PC-3 (cell line): ENCODE measurements at regions of chr12 and their contacts with region 1.

Region 1: DNA sequence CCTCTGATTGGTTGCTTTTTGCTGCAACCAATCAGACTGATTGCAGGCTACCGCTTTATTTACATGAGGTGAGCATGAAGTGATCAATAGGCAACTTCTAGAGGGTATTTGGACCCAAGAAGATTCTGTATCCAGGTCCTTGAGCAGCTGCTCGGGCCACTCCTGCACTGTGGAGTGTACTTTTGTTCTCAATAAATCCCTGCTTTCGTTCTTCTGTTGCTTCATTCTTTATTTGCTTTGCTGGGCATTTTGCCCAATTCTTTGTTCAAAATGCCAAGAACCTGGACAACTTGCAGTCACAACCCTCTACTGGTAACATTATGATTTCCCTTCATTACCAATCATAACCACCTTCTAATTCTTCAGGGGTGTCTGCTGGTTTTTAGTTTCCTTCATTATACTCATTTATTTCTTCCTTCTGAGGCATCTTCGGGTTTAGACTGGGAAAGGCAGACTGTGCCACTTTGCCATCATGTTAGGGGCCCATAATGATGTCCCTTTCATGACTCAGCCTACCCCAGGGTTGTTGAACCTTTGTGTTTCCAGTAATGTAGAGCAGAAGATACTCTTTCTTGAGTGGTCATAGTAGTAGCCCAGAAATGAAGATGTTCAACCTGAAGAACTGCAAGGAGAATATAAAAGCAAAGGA is 43.4 kb upstream of the LIMA1 start:
- DNase-seq: peak; percentile 88
- ATAC-seq: peak; percentile 76
- H3K4me3 ChIP-seq: peak overlapping the region; percentile 48
- H3K27ac ChIP-seq: peak overlapping the region; percentile 65
- H3K4me1 ChIP-seq: peaks cover 29% of the 10 kb centered on the region
- H3K27me3 ChIP-seq: no peaks in the 10 kb centered on the region
- CTCF ChIP-seq: no peak; the same call in 1 of the 2 replicates

Region 2: DNA sequence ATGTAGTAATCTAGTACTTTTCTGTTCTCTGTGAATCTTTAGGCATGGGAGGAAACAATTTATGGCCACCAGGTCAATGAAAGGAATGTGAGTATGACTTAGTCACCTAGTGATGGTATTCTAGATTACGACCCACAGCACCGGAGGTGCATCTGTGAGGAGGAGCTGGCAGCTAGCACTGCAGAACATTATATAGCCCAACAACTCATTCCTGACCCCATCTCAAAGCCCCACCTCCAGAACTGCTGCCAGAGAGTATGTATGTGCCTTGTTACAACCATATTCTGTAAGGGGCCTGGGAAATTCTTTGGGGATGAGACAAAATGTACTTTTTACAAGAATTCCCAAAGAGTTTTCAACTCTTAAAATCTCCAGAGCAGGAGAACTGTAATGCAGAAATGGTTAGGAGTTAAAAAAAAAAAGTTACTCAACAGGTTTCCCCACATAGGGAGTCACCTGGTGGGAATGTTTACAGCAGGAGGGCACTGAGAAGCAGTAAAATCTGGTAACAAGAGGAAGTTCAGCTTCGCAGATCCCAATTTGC is 124.7 kb before region 1 on chr12:
- CTCF ChIA-PET with region 1: no interaction called
- POLR2A ChIA-PET with region 1: no interaction called
- intact Hi-C with region 1: loop called (anchors 5 kb)
- DNase-seq: peak; percentile 97
- ATAC-seq: peak; percentile 92
- H3K4me3 ChIP-seq: peak overlapping the region; percentile 61; the same call in 1 of the 2 replicates
- H3K27ac ChIP-seq: peak overlapping the region; percentile 99
- H3K4me1 ChIP-seq: peaks cover 51% of the 10 kb centered on the region
- H3K27me3 ChIP-seq: no peaks in the 10 kb centered on the region
- CTCF ChIP-seq: no peak

Region 3: DNA sequence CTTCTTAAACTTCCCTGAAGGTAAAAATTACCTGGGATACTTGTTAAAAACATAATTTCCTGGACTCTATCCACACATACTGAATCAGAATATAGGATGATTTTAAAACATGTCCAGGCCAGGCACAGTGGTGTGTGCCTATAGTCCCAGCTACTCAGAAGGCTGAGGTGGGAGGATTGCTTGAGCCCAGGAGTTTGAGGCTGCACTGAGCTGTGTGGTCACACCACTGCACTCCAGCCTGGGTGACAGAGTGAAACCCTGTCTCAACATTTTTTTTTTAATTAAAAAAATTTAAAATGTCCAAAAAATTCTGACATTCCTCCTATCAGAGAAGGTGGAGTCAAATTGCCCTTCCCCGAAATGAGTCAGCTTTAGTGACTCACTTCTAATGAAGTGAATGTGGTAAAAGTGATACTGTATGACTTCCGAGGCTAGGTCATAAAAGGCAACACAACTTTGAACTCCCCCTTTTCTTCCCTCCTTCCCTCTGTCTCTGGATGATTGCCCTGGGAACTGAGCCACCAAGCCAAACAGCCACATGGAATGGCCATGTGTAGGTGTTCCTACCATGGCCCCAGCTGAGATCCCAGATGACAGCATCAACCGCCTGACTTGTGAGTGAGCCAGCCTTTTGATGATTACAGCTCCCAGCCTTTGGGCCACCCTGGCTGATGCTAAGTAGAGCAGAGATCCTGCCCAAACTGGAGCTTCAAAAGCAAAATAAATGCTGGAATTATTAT is 79.7 kb before region 1 on chr12:
- CTCF ChIA-PET with region 1: no interaction called
- POLR2A ChIA-PET with region 1: no interaction called
- intact Hi-C with region 1: no loop called
- DNase-seq: peak; percentile 99
- ATAC-seq: peak; percentile 84
- H3K4me3 ChIP-seq: no peak overlapping the region
- H3K27ac ChIP-seq: peak overlapping the region; percentile 96
- H3K4me1 ChIP-seq: peaks cover 69% of the 10 kb centered on the region
- H3K27me3 ChIP-seq: no peaks in the 10 kb centered on the region
- CTCF ChIP-seq: no peak

Region 4: DNA sequence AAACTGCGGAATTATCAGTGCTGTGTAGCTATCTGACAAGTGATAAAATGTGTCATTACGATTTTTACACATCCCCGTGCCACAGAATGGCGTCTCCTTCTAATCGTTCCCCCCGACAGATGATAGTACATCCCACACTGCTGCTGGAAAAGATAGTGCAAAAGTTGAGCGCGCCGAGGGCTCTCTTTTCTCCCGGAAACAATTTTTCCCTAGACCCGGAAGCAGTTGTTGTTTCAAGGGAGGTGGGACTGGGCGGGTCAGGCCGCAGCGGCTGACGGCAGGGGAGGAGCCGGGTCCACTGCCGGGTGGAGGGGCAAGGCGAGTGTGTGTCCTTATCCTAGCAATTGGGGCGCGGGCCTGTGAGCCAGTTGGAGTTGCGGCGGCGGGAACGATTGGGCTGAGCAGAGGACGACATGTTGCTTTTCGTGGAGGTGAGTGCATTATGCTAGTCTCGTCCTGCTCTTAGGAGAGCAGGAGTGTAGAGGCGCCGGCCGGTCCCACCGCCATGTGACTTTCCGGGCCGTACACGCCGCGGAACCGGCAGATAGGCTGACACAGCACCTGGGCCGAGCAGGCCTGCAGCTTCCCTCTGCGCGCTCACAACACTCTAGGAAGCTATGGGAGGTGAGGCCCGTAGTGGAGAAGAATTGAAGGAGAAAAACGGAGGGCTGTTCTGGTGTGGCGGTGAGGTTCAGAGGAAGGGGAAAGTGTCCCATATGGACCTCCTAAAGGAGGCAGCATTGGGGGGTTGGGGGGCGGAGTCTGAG is 74.0 kb after region 1 on chr12 and contains the start of gene LARP4:
- CTCF ChIA-PET with region 1: no interaction called
- POLR2A ChIA-PET with region 1: no interaction called
- intact Hi-C with region 1: loop called (anchors 2 kb)
- DNase-seq: peak; percentile 97
- ATAC-seq: peak; percentile 86
- H3K4me3 ChIP-seq: peak within 1 kb of the TSS; percentile 95
- H3K27ac ChIP-seq: peak within 1 kb of the TSS; percentile 75
- H3K4me1 ChIP-seq: peaks cover 32% of the 10 kb centered on the region
- H3K27me3 ChIP-seq: no peaks in the 10 kb centered on the region
- CTCF ChIP-seq: no peak
- total RNA-seq, gene LARP4: 35.1 and 39.1 TPM in 2 replicates

Region 5: DNA sequence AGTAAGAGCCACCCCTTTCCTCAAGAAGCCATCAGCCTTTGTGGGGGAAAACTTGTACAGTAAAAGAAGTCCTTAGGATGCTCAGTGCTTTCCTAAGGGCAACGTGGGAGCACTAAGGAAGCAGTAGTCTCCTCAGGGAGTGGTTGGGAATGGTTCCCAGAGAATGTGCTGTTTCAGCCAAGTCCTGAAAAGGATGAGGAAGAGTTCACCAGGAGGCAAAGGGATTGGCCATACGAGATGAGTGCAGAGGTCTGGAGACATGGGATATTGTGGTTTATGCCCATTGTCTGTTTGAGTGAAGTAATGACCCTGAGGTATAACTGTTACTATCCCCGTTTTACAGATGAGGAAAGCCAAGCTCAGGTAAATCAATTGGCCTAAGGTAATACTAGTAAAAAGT is 351.1 kb after region 1 on chr12:
- CTCF ChIA-PET with region 1: no interaction called
- POLR2A ChIA-PET with region 1: no interaction called
- intact Hi-C with region 1: loop called (anchors 2 kb)
- DNase-seq: peak; percentile 93
- ATAC-seq: peak; percentile 75
- H3K4me3 ChIP-seq: no peak overlapping the region
- H3K27ac ChIP-seq: peak overlapping the region; percentile 88
- H3K4me1 ChIP-seq: peaks cover 67% of the 10 kb centered on the region
- H3K27me3 ChIP-seq: no peaks in the 10 kb centered on the region
- CTCF ChIP-seq: no peak